SK-N-SH (cell line): ENCODE measurements at regions of chr18 and their contacts with region 1.

Region 1: DNA sequence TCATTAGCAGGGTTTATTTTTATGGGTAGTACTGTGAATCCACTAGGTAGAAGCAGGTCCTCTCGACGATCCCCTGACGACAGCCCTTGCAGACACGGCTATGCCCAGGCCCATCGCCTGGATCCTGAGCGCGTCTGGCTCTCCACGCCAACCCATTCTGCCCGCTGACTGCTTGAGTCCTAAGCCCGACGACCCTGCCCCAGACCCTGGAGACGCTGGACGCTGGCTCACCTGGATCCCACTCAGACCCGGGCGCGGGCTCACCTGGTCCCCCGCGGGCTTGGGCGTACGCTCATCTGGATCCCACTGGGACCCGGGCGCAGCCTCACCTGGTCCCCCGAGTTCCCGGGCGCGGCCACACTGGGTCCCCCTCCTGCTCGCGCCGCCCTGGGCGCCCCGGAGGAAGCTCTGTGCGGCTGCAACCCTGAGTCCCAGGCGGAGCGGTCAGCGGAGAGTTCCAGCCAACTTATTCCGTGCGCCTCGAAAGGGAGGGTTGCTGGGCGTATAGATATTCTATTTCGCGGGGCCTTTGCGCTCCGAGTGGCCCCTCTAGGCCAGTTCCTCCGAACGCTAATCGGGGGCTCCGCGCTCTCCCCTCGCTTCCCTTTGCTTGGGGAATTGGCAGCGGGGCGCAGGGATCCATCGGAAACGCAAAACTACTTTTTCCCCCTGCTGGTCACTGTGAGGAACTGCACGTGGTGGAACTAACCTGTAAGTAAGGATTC is 22.4 kb upstream of the RMP24 start:
- DNase-seq: peak; percentile 79
- H3K4me3 ChIP-seq: peak overlapping the region; percentile 56 to 80
- H3K27ac ChIP-seq: no peak overlapping the region
- H3K4me1 ChIP-seq: peaks cover 0 to 7% of the 10 kb centered on the region in 2 experiments; a peak in 1 of 4 replicates
- H3K27me3 ChIP-seq: no peaks in the 10 kb centered on the region
- CTCF ChIP-seq: peak; percentile 93
- EP300 ChIP-seq: no peak
- RAD21 ChIP-seq: peak; percentile 71

Region 2: GRCh38 chr18:35407871-35408481 is 542.1 kb before region 1 on chr18:
- CTCF ChIA-PET with region 1: interaction called, 10 read pairs
- POLR2A ChIA-PET with region 1: no interaction called
- DNase-seq: peak; percentile 62
- H3K4me3 ChIP-seq: no peak overlapping the region; a peak in 1 of 4 replicates
- H3K27ac ChIP-seq: no peak overlapping the region
- H3K4me1 ChIP-seq: no peaks in the 10 kb centered on the region
- H3K27me3 ChIP-seq: no peaks in the 10 kb centered on the region
- CTCF ChIP-seq: peak; percentile 87
- EP300 ChIP-seq: no peak
- RAD21 ChIP-seq: peak; percentile 83

Region 3: GRCh38 chr18:35917044-35917443 is 33.0 kb before region 1 on chr18:
- CTCF ChIA-PET with region 1: interaction called, 10 read pairs
- POLR2A ChIA-PET with region 1: no interaction called
- DNase-seq: no peak
- H3K4me3 ChIP-seq: no peak overlapping the region
- H3K27ac ChIP-seq: no peak overlapping the region
- H3K4me1 ChIP-seq: peaks cover 0 to 2% of the 10 kb centered on the region in 2 experiments; a peak in 1 of 4 replicates
- H3K27me3 ChIP-seq: no peaks in the 10 kb centered on the region; the same call in 1 of the 2 replicates
- CTCF ChIP-seq: no peak
- EP300 ChIP-seq: no peak
- RAD21 ChIP-seq: no peak

Region 4: GRCh38 chr18:35939138-35939537 is 10.9 kb before region 1 on chr18:
- CTCF ChIA-PET with region 1: interaction called, 34 read pairs
- POLR2A ChIA-PET with region 1: no interaction called
- DNase-seq: no peak
- H3K4me3 ChIP-seq: no peak overlapping the region
- H3K27ac ChIP-seq: no peak overlapping the region
- H3K4me1 ChIP-seq: no peaks in the 10 kb centered on the region; a peak in 1 of 4 replicates
- H3K27me3 ChIP-seq: no peaks in the 10 kb centered on the region
- CTCF ChIP-seq: peak; percentile 16; the same call in 1 of the 2 replicates
- EP300 ChIP-seq: no peak
- RAD21 ChIP-seq: no peak; the same call in 1 of the 2 replicates

Region 5: GRCh38 chr18:35972197-35973052 is 22.4 kb after region 1 on chr18 and contains the start of gene RMP24:
- CTCF ChIA-PET with region 1: interaction called, 14 read pairs
- POLR2A ChIA-PET with region 1: no interaction called
- DNase-seq: peak; percentile 97
- H3K4me3 ChIP-seq: peak within 1 kb of the TSS; percentile 94 to 98
- H3K27ac ChIP-seq: peak within 1 kb of the TSS; percentile 81 to 95
- H3K4me1 ChIP-seq: peaks cover 4 to 7% of the 10 kb centered on the region in 2 experiments; a peak in 3 of 4 replicates
- H3K27me3 ChIP-seq: no peaks in the 10 kb centered on the region
- CTCF ChIP-seq: no peak
- EP300 ChIP-seq: no peak
- RAD21 ChIP-seq: no peak

Region 6: DNA sequence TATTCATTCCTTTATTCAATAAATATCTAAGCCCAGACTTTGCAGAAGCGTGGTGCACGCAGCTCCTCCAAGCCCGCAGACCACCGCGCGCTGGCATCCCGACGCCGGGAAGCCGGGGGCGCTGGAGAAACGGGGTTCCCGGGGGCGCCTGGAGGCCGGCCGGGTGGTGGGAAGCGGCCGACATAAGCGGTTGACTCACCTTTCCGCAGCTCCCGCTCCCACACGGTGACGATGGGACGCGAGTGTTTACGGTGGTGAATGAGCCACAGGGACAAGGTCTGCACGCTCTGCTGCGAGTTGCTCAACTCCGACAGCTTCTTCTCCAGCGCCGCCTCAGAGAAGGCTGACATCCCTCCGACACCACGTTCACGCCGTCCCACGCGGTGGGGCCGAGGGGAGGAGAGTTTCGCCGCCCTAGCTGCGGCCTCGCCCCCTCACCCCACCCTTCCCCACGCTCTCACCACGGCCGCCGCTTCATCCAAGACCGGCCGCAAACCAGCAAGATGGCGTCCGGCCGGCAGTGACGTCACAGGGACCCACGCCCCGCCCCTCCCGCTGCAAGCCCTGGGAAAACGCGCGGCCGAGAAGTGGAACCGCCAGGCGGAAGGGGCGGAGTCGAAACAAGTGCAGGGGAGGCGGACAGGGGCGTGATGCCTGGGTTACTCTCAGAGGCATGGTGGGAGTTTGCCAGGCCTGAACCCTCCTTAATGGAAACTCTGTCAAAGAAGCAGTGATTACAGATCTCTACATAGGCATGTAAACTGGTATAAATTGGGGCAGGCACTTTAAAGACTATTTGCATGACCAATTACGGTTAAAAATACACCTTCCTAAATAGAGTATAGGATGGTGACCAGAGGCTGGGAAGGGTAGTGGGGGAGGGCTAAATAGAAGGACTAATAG is 117.2 kb after region 1 on chr18 and contains the start of gene RPRD1A:
- CTCF ChIA-PET with region 1: no interaction called
- POLR2A ChIA-PET with region 1: no interaction called
- DNase-seq: peak; percentile 99
- H3K4me3 ChIP-seq: peak within 1 kb of the TSS; percentile 80 to 84
- H3K27ac ChIP-seq: peak within 1 kb of the TSS; percentile 89 to 90
- H3K4me1 ChIP-seq: peaks cover 0 to 11% of the 10 kb centered on the region in 2 experiments; a peak in 2 of 4 replicates
- H3K27me3 ChIP-seq: no peaks in the 10 kb centered on the region
- CTCF ChIP-seq: no peak
- EP300 ChIP-seq: no peak
- RAD21 ChIP-seq: no peak
- polyA plus RNA-seq, gene RPRD1A: 28.9 and 44.4 TPM in 2 replicates